ENCODE measurements at regions of chr15 and their contacts with region 1.

Region 1: DNA sequence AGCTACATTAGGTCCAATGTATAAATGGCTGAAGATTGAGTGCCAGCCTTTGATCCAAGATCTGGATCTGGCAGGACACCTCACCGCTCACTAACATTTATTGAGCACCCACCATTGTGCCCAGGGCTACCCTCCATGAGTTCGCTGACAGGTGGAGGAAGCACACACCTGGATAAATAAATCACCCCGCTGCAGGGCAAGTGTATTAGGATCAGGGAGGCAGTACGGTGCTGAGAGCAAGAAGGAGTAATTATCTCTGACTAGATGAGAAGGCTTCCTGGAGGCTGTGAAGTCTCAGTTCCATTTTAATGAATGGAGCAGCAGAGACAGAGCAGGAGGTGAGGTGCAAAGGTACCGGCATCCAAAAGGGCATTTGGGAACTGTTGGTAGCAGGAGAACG is 104.1 kb downstream of the LIPC start:
- DNase-seq: no peak
- H3K4me3 ChIP-seq: no peak overlapping the region
- H3K4me3 Mint-ChIP-seq: no peak overlapping the region
- H3K27ac Mint-ChIP-seq: peak overlapping the region; percentile 45
- H3K4me1 ChIP-seq: peaks cover 38% of the 10 kb centered on the region
- H3K4me1 Mint-ChIP-seq: peaks cover 51% of the 10 kb centered on the region
- H3K27me3 ChIP-seq: no peaks in the 10 kb centered on the region
- H3K27me3 Mint-ChIP-seq: no peaks in the 10 kb centered on the region
- CTCF ChIP-seq: no peak

Region 2: DNA sequence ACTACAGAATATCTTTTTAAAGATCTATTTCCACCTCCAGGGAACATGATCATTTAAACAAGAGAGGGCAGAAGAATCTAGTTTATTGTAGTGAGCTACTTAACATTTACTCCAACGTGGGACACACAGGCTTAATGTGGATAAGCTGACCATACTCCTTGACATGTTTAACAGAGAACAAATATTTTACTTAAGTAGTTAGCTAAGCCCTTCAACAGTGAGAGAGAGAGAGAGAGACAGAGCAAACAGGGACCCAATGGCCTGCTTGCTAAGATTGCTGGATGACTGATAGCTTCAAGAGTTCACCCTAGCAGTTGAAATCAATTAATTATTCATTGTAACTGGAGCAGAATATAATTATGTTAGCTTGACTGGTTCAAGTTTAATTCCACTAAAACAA is 55.0 kb after region 1 on chr15:
- CTCF ChIA-PET with region 1: no interaction called
- POLR2A ChIA-PET with region 1: no interaction called
- intact Hi-C with region 1: loop called (anchors 2 kb)
- DNase-seq: no peak
- H3K4me3 ChIP-seq: no peak overlapping the region
- H3K4me3 Mint-ChIP-seq: peak overlapping the region; percentile 51
- H3K27ac Mint-ChIP-seq: peak overlapping the region; percentile 85
- H3K4me1 ChIP-seq: peaks cover 56% of the 10 kb centered on the region
- H3K4me1 Mint-ChIP-seq: peaks cover 30% of the 10 kb centered on the region
- H3K27me3 ChIP-seq: no peaks in the 10 kb centered on the region
- H3K27me3 Mint-ChIP-seq: no peaks in the 10 kb centered on the region
- CTCF ChIP-seq: no peak

Measured in Caco-2 (cell line).